T-cell (primary cell): ENCODE measurements at regions of chr11 and their contacts with region 1.

Region 1: GRCh38 chr11:8099291-8099899 is 18.4 kb downstream of the TUB start:
- DNase-seq: peak in 34 of 35 experiments; percentile 11 to 77 (median 56)
- ATAC-seq: peak; percentile 33 to 62 (median 48)
- H3K4me3 ChIP-seq: no peak overlapping the region
- H3K4me3 Mint-ChIP-seq: no peak overlapping the region
- H3K27ac ChIP-seq: no peak overlapping the region
- H3K27ac Mint-ChIP-seq: no peak overlapping the region
- H3K4me1 ChIP-seq: no peaks in the 10 kb centered on the region
- H3K4me1 Mint-ChIP-seq: no peaks in the 10 kb centered on the region
- H3K27me3 ChIP-seq: no peaks in the 10 kb centered on the region
- H3K27me3 Mint-ChIP-seq: no peaks in the 10 kb centered on the region

Region 2: DNA sequence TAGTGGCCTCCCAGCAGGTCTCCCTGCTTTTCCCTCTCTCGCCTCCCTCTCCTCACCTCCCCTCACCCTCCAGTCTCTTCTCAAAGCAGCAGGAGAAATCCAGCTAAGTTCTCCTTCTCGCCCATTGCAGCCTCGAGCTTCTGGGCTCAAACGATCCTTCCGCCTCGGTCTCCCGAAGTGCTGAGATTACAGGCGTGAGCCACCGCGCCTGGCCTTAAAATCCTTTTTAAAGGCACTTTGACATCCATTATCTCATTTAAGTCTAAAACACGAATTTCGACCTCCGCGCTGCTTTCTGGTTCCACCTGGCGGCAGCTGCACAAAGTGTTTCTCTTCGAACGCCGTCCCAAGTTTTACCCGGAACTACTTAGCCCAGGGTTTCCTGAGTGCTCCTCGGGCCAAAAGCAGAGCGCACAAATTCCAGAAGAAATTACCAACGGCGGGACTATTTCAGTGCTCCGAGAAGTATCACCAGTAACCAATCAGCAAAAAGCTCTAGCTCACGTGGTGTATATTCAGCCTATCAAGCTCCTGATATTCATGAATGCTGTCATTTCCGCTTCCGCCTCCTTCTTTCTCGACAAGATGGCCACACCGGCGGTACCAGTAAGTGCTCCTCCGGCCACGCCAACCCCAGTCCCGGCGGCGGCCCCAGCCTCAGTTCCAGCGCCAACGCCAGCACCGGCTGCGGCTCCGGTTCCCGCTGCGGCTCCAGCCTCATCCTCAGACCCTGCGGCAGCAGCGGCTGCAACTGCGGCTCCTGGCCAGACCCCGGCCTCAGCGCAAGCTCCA is 112.4 kb before region 1 on chr11 and contains the start of gene EIF3F:
- CTCF ChIA-PET with region 1: interaction called in 1 of 2 experiments, 12 read pairs
- POLR2A ChIA-PET with region 1: no interaction called
- DNase-seq: peak; percentile 72 to 98 (median 91)
- ATAC-seq: peak; percentile 97 to 98 (median 98)
- H3K4me3 ChIP-seq: peak within 1 kb of the TSS; percentile 67 to 70
- H3K4me3 Mint-ChIP-seq: peak within 1 kb of the TSS; percentile 88 to 97 (median 92)
- H3K27ac ChIP-seq: peak within 1 kb of the TSS; percentile 71
- H3K27ac Mint-ChIP-seq: peak within 1 kb of the TSS; percentile 99
- H3K4me1 ChIP-seq: peaks cover 20 to 21% of the 10 kb centered on the region in 2 experiments
- H3K4me1 Mint-ChIP-seq: peaks cover 44 to 54% (median 47%) of the 10 kb centered on the region in 3 donors
- H3K27me3 ChIP-seq: no peaks in the 10 kb centered on the region
- H3K27me3 Mint-ChIP-seq: no peaks in the 10 kb centered on the region
- total RNA-seq, gene EIF3F: 344 to 400 (median 369) TPM

Region 3: GRCh38 chr11:8006349-8006977 is 92.9 kb before region 1 on chr11:
- CTCF ChIA-PET with region 1: interaction called, 31 to 63 read pairs
- POLR2A ChIA-PET with region 1: no interaction called
- DNase-seq: peak in 19 of 35 experiments; percentile 7 to 73 (median 29)
- ATAC-seq: peak in 3 of 4 experiments; percentile 57 to 72 (median 64)
- H3K4me3 ChIP-seq: no peak overlapping the region
- H3K4me3 Mint-ChIP-seq: no peak overlapping the region
- H3K27ac ChIP-seq: no peak overlapping the region
- H3K27ac Mint-ChIP-seq: no peak overlapping the region
- H3K4me1 ChIP-seq: no peaks in the 10 kb centered on the region
- H3K4me1 Mint-ChIP-seq: no peaks in the 10 kb centered on the region
- H3K27me3 ChIP-seq: peaks cover 0 to 6% of the 10 kb centered on the region in 2 experiments
- H3K27me3 Mint-ChIP-seq: peaks cover 8 to 9% of the 10 kb centered on the region in 2 donors

Region 4: GRCh38 chr11:8033305-8034105 is 65.9 kb before region 1 on chr11:
- CTCF ChIA-PET with region 1: interaction called, 10 to 75 read pairs
- POLR2A ChIA-PET with region 1: no interaction called
- DNase-seq: peak in 29 of 35 experiments; percentile 7 to 69 (median 26)
- ATAC-seq: peak; percentile 68 to 80 (median 76)
- H3K4me3 ChIP-seq: no peak overlapping the region
- H3K4me3 Mint-ChIP-seq: peak overlapping the region in 2 of 3 donors; percentile 29 to 41
- H3K27ac ChIP-seq: no peak overlapping the region
- H3K27ac Mint-ChIP-seq: no peak overlapping the region
- H3K4me1 ChIP-seq: peaks cover 0 to 9% of the 10 kb centered on the region in 2 experiments
- H3K4me1 Mint-ChIP-seq: peaks cover 6 to 8% (median 6%) of the 10 kb centered on the region in 3 donors
- H3K27me3 ChIP-seq: peaks cover 0 to 58% of the 10 kb centered on the region in 2 experiments
- H3K27me3 Mint-ChIP-seq: peaks cover 30 to 37% of the 10 kb centered on the region in 2 donors

Region 5: DNA sequence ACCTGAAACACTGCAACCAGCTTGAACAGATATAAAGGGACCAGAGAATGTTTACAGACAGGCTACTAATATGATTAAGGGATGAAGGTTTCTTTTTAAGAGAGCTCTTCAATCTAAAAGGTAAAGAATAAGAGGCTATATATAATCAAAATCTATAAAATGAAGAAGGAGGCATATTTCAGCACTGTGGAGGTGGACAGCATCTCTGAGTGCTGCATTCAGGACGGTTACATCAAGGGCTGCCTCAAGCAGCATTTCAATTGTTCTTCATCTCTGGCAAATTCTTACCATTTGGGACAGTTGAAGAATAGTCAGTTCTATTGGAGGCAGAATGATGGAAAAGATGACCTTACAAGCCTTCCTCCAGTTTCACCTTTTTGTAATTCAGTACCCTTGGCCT is 303.9 kb after region 1 on chr11:
- CTCF ChIA-PET with region 1: no interaction called
- POLR2A ChIA-PET with region 1: no interaction called
- DNase-seq: no peak
- ATAC-seq: no peak
- H3K4me3 ChIP-seq: no peak overlapping the region
- H3K4me3 Mint-ChIP-seq: no peak overlapping the region
- H3K27ac ChIP-seq: no peak overlapping the region
- H3K27ac Mint-ChIP-seq: no peak overlapping the region
- H3K4me1 ChIP-seq: no peaks in the 10 kb centered on the region
- H3K4me1 Mint-ChIP-seq: no peaks in the 10 kb centered on the region
- H3K27me3 ChIP-seq: no peaks in the 10 kb centered on the region
- H3K27me3 Mint-ChIP-seq: no peaks in the 10 kb centered on the region